ENCODE measurements at regions of chr20 and their contacts with region 1.

Region 1: DNA sequence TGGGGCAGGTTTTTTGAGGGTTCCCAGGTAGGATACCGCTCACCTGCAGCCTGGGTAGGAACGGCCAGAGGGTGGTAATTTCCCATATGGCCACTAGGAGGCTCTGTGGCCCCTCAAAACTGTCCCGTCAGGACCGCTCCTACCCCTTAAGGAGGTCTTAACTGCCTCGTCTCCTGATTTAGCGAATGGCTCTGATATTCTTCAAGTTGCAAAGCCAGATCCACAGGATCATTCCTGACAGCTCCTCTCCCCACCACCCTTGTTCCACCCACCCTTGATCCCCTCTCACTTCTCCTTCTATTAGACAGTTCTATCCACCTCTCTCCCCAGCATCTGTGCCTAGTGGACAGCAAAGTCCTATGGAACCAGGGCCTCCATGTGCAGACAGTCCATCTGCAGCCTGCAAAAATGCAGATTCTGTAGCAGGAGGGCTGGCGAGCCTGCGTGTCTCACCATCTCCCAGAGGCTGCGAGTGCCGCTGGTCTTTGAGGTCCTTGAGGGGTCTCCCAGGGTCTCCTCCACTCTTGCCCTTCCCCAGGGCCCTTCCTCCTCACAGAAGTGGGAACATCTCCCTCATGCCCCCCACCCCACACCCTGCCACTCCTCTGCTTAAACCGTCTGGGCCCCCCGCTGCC is 34.3 kb upstream of the ZBP1 start:
- DNase-seq: peak in 1 of 2 donors; percentile 62
- ATAC-seq: peak; percentile 72

Region 2: DNA sequence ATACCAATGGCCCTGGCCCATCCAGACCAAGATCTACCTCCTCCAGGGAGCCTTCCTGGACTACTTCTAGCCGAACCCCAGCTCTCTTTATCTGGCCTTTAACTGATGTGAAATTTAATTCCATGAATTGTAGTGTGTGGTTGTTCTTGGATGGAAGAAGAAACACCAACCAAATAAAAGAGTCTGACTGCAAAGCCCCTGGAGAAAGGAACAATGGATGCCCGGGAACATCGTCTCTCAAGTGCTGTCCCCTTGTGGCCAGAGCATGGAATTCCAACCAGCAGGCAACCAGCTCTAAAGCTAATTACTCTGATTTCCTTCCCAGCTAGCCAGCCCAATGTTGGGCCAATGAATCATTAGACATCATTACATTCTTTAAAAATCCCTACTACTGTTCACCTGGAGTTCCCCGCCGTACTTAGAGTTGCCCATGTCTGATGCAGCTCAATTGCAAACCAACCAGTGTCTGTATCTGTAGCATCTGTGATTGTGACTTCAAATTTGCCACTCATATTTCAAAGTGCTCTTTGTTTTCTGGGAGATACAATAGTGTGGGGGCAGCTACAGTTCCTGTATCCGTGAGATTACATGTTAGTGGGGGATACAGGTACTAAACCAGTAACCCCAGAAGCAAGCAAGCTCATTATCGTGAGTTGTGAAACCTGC is 432.8 kb after region 1 on chr20:
- intact Hi-C with region 1: loop called in 1 of 2 experiments (anchors 10 kb)
- DNase-seq: peak in 1 of 2 donors; percentile 26
- ATAC-seq: peak; percentile 66

Region 3: GRCh38 chr20:58179432-58180099 is 525.1 kb after region 1 on chr20:
- intact Hi-C with region 1: loop called in 1 of 2 experiments (anchors 10 kb)
- DNase-seq: peak in 1 of 2 donors; percentile 65
- ATAC-seq: peak; percentile 91